SK-N-SH (cell line): ENCODE measurements at regions of chr11 and their contacts with region 1.

Region 1: DNA sequence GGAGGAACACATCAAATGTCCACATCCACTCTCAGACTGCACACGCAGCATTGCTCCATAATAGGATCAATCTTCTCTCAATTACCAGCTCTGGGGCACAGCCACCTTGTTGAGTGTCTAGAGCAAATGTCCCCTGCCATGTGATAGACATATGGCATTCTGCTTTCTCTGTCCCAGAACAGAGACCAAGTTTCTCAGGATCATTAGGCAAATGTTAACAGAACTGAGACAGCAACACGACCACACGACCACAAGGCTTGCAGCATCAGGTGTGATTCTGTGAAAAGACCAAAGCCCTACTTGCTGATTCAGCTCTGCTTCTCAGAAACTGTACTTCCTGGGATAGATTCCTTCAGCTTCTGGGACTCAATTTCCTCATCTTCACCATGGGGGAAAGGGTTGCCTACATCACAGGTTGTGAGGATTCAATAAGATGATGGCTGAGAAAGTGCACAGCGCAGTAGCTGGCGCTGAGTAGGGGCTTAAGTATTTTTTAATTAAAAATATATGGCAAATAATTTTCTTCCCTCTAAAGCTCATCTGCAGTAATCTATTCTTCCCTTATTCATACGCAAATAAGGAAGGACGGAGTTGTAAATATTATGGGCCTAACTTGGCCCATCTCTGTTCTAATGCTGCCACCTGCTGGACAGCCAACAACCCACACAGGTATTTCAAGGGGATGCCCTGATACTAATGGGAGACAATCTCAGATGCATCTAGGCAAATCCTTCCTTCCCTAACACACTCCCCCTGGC is 54.3 kb upstream of the USP47 start:
- DNase-seq: peak; percentile 57
- H3K4me3 ChIP-seq: no peak overlapping the region
- H3K27ac ChIP-seq: no peak overlapping the region
- H3K4me1 ChIP-seq: no peaks in the 10 kb centered on the region; a peak in 1 of 4 replicates
- H3K27me3 ChIP-seq: no peaks in the 10 kb centered on the region
- CTCF ChIP-seq: peak; percentile 94
- EP300 ChIP-seq: no peak
- RAD21 ChIP-seq: peak; percentile 98

Region 2: GRCh38 chr11:10770626-10771254 is 1016.7 kb before region 1 on chr11:
- CTCF ChIA-PET with region 1: interaction called, 10 read pairs
- POLR2A ChIA-PET with region 1: no interaction called
- DNase-seq: peak; percentile 49
- H3K4me3 ChIP-seq: no peak overlapping the region
- H3K27ac ChIP-seq: peak overlapping the region in 1 of 2 experiments; percentile 28; a peak in 2 of 4 replicates
- H3K4me1 ChIP-seq: peaks cover 0 to 8% of the 10 kb centered on the region in 2 experiments; a peak in 2 of 4 replicates
- H3K27me3 ChIP-seq: no peaks in the 10 kb centered on the region
- CTCF ChIP-seq: peak; percentile 87
- EP300 ChIP-seq: no peak
- RAD21 ChIP-seq: peak; percentile 74

Region 3: GRCh38 chr11:10943968-10944367 is 843.5 kb before region 1 on chr11:
- CTCF ChIA-PET with region 1: interaction called, 22 read pairs
- POLR2A ChIA-PET with region 1: no interaction called
- DNase-seq: no peak
- H3K4me3 ChIP-seq: no peak overlapping the region
- H3K27ac ChIP-seq: no peak overlapping the region
- H3K4me1 ChIP-seq: no peaks in the 10 kb centered on the region; a peak in 1 of 4 replicates
- H3K27me3 ChIP-seq: no peaks in the 10 kb centered on the region
- CTCF ChIP-seq: no peak
- EP300 ChIP-seq: no peak
- RAD21 ChIP-seq: no peak

Region 4: DNA sequence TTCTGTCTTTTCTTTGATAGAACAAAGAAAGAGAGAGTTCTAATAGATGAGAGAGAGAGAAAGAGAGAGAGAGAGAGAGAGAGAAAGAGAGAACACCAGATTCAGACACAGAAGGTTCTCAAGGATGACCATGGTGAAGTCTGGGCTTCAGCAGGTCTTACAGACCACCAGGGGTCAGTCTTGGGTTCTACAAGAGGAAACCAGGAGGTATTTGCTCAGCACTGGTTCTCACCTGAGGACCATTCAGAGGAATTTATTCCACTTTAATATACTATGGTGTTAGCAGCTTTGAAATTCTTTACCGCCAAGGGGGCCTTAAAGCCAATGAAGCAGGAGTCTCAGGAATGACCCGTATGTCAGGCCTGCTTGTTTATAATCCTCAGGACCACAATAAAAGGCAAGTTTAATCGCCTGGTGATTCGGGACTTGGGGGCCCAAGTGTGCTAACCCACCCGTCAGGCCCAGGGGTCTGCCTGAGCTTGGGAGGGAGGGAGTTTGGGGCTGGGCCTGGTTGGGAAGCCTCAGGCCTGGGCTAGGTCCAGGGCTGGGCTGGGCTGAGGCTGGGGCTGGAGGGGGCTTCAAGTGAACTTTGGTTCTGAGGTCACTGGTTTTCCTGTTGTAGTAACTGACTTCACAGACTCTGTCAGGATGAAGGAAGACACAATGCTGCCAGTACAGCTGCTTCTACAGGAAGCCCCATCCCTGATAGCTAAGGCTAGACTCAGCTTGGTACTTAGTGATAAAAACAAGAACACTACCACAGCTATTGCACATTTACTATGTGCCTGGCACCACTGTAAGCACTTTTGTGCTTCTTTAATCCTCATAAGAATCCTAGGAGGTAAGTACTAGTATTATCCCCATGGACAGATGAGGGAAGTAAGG is 750.4 kb before region 1 on chr11:
- CTCF ChIA-PET with region 1: interaction called, 95 read pairs
- POLR2A ChIA-PET with region 1: no interaction called
- DNase-seq: peak; percentile 55
- H3K4me3 ChIP-seq: no peak overlapping the region
- H3K27ac ChIP-seq: no peak overlapping the region
- H3K4me1 ChIP-seq: peaks cover 0 to 18% of the 10 kb centered on the region in 2 experiments; a peak in 1 of 4 replicates
- H3K27me3 ChIP-seq: no peaks in the 10 kb centered on the region; the same call in 1 of the 2 replicates
- CTCF ChIP-seq: peak; percentile 58
- EP300 ChIP-seq: no peak
- RAD21 ChIP-seq: peak; percentile 79

Region 5: DNA sequence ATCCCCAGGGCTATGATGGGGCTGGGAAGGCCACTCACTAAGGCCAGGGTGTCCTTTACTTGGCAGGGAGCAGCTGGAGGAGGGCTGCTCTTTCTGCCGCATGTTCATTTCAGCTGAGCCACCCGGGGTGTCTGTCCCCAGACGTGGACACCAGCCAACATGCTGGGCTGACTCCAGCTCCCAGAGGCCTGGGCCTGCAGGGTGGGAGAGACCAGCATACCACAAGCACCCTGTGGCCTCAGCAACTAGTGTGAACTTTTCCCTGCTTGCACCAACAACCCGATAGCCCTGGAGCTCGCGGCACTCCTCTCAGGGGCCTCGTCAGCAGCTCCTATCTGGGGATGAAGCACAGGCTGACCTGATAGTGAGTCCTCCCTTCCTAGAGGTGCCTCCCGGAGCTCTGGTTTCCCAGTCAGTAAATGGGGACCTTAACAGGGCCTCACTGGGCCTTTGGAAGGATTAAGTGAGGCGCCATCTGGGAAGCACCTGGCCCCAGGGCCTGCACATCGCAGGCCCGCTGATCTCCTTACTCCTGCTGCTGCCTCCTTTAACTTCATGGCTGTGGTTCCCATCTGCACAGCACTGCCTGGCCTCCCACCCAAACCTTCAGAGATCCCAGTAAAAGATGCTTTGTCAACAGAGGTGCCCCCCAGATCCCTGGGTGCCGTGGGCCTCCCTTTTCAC is 249.1 kb before region 1 on chr11:
- CTCF ChIA-PET with region 1: interaction called, 11 read pairs
- POLR2A ChIA-PET with region 1: no interaction called
- DNase-seq: peak; percentile 77
- H3K4me3 ChIP-seq: no peak overlapping the region
- H3K27ac ChIP-seq: peak overlapping the region in 1 of 2 experiments; percentile 93; a peak in 2 of 4 replicates
- H3K4me1 ChIP-seq: peaks cover 0 to 77% of the 10 kb centered on the region in 2 experiments; a peak in 2 of 4 replicates
- H3K27me3 ChIP-seq: no peaks in the 10 kb centered on the region
- CTCF ChIP-seq: no peak
- EP300 ChIP-seq: no peak; a peak in 1 of 4 replicates
- RAD21 ChIP-seq: peak; percentile 24; the same call in 1 of the 2 replicates

Region 6: GRCh38 chr11:11717064-11717725 is 70.3 kb before region 1 on chr11:
- CTCF ChIA-PET with region 1: no interaction called
- POLR2A ChIA-PET with region 1: no interaction called
- DNase-seq: no peak
- H3K4me3 ChIP-seq: no peak overlapping the region
- H3K27ac ChIP-seq: no peak overlapping the region
- H3K4me1 ChIP-seq: no peaks in the 10 kb centered on the region
- H3K27me3 ChIP-seq: no peaks in the 10 kb centered on the region
- CTCF ChIP-seq: no peak
- EP300 ChIP-seq: no peak
- RAD21 ChIP-seq: no peak

Region 7: GRCh38 chr11:11798586-11799438 is 11.3 kb after region 1 on chr11:
- CTCF ChIA-PET with region 1: interaction called, 32 read pairs
- POLR2A ChIA-PET with region 1: no interaction called
- DNase-seq: peak; percentile 60
- H3K4me3 ChIP-seq: no peak overlapping the region; a peak in 1 of 4 replicates
- H3K27ac ChIP-seq: no peak overlapping the region
- H3K4me1 ChIP-seq: no peaks in the 10 kb centered on the region
- H3K27me3 ChIP-seq: no peaks in the 10 kb centered on the region; the same call in 1 of the 2 replicates
- CTCF ChIP-seq: peak; percentile 96
- EP300 ChIP-seq: no peak
- RAD21 ChIP-seq: peak; percentile 84

Region 8: DNA sequence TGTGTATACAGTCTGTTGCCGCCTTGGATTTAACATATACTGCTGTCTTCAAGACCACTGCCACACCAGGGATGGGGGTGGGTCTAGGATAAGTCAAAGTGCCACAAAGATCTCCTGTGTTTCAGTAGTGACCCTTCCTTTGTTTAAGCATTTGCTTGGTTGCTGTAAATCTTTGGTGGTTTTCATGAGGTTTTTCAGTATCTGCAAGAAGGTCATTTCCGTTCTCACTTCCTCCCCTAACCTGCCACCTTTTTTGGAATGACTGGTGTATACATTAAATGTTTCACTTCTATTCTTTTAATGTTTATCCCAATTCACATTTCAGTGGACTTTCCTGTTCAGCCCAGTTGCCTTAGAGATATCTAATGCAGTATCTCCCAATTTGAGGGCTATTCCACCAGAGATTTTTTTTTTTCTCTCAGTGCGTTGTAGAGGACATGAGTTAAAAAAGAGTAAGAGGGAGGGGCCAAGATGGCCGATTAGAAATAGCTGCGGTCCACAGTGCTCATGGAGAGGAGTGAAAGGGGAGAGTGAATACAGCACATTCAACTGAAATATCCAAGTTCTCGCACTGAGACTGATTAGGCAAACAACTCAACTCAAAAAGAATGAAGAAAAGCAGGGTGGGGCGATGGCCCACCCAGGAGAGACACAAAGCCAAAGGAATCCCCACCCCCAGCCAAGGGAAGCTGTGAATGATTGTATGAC is 97.4 kb after region 1 on chr11:
- CTCF ChIA-PET with region 1: no interaction called
- POLR2A ChIA-PET with region 1: no interaction called
- DNase-seq: no peak
- H3K4me3 ChIP-seq: no peak overlapping the region
- H3K27ac ChIP-seq: no peak overlapping the region
- H3K4me1 ChIP-seq: no peaks in the 10 kb centered on the region
- H3K27me3 ChIP-seq: no peaks in the 10 kb centered on the region
- CTCF ChIP-seq: no peak
- EP300 ChIP-seq: no peak
- RAD21 ChIP-seq: no peak

Region 9: DNA sequence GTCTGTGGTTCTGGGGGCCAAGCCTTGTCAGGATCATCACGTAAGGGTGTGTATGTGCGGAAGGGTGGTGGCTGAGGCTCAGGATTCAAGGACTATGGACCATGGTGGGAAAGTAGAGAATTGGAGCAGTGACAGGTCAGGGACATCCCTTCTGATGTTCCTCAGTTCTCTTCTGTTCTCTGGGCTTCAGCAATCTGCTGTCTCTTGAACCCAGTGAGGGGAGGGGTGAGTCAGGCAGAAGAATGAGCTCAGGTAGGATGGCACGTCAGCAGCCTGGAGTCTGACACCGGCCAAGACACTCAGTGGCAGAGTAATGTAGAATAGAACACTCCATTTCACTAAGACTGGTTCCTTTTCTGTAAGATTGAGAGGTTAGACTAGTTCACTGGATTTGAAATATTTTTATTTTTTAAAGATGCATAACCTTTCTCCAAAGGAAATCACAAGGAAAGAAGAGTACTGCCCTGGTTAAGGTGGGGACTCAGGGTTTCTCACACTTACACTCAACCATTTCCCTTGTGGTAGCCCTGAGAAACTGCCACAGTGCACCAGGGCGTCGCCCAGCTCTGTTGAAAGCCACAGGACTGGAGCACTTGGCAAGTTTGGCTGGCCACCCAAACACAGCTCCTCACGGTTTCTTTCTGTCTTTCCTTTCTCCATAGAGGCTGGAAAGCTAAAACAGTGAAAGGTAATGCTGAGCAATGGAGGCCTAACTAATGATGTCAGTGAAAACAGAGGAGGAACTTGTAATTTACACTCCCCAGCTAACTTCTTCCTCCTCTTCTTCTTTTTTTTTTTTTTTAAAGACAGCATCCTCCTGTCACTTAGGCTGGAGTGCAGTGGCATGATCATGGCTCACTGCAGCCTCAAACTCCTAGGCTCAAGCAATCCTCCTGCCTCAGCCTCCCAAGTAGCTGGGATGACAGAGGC is 299.9 kb after region 1 on chr11:
- CTCF ChIA-PET with region 1: no interaction called
- POLR2A ChIA-PET with region 1: no interaction called
- DNase-seq: no peak
- H3K4me3 ChIP-seq: peak overlapping the region; percentile 34 to 63; a peak in 3 of 4 replicates
- H3K27ac ChIP-seq: peak overlapping the region; percentile 90 to 100
- H3K4me1 ChIP-seq: peaks cover 6 to 52% of the 10 kb centered on the region in 2 experiments; a peak in 3 of 4 replicates
- H3K27me3 ChIP-seq: no peaks in the 10 kb centered on the region
- CTCF ChIP-seq: peak; percentile 38
- EP300 ChIP-seq: no peak
- RAD21 ChIP-seq: no peak

Region 10: GRCh38 chr11:12216671-12217374 is 429.3 kb after region 1 on chr11:
- CTCF ChIA-PET with region 1: no interaction called
- POLR2A ChIA-PET with region 1: no interaction called
- DNase-seq: peak; percentile 72
- H3K4me3 ChIP-seq: no peak overlapping the region
- H3K27ac ChIP-seq: peak overlapping the region in 1 of 2 experiments; percentile 59
- H3K4me1 ChIP-seq: peaks cover 8 to 20% of the 10 kb centered on the region in 2 experiments; a peak in 3 of 4 replicates
- H3K27me3 ChIP-seq: no peaks in the 10 kb centered on the region
- CTCF ChIP-seq: no peak
- EP300 ChIP-seq: no peak
- RAD21 ChIP-seq: no peak